T-cell (primary cell): ENCODE measurements at regions of chr16 and their contacts with region 1.

Region 1: GRCh38 chr16:7561908-7562405 is 229.3 kb downstream of the RBFOX1 start:
- DNase-seq: no peak
- ATAC-seq: no peak
- H3K4me3 ChIP-seq: no peak overlapping the region
- H3K4me3 Mint-ChIP-seq: no peak overlapping the region
- H3K27ac ChIP-seq: no peak overlapping the region
- H3K27ac Mint-ChIP-seq: no peak overlapping the region
- H3K4me1 ChIP-seq: no peaks in the 10 kb centered on the region
- H3K4me1 Mint-ChIP-seq: no peaks in the 10 kb centered on the region
- H3K27me3 ChIP-seq: no peaks in the 10 kb centered on the region
- H3K27me3 Mint-ChIP-seq: no peaks in the 10 kb centered on the region

Region 2: GRCh38 chr16:7313170-7313569 is 248.8 kb before region 1 on chr16:
- CTCF ChIA-PET with region 1: no interaction called
- POLR2A ChIA-PET with region 1: no interaction called
- DNase-seq: no peak
- ATAC-seq: no peak
- H3K4me3 ChIP-seq: no peak overlapping the region
- H3K4me3 Mint-ChIP-seq: no peak overlapping the region
- H3K27ac ChIP-seq: no peak overlapping the region
- H3K27ac Mint-ChIP-seq: no peak overlapping the region
- H3K4me1 ChIP-seq: no peaks in the 10 kb centered on the region
- H3K4me1 Mint-ChIP-seq: no peaks in the 10 kb centered on the region
- H3K27me3 ChIP-seq: no peaks in the 10 kb centered on the region
- H3K27me3 Mint-ChIP-seq: peaks cover 0 to 3% of the 10 kb centered on the region in 2 donors

Region 3: DNA sequence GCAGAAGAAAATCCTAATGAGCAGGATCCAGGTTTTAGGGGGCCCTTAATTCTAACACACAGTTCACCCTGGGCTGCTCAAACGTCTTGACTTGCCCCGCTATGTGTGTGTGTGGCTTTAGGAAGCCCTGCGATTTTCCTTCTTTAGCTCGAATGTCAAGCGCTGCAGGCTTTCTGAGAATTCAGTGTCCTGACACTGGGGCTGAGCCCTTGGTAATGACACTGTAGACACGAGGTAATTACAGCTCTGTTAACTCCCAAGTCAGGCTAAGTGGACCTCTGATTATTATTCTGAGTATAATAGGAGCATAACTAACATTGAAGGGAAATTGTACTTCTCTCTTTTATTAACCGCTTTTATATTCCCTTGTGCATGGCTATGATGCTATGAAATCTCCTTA is 27.2 kb before region 1 on chr16:
- CTCF ChIA-PET with region 1: no interaction called
- POLR2A ChIA-PET with region 1: interaction called in 1 of 2 experiments, 18 read pairs
- DNase-seq: no peak
- ATAC-seq: no peak
- H3K4me3 ChIP-seq: no peak overlapping the region
- H3K4me3 Mint-ChIP-seq: no peak overlapping the region
- H3K27ac ChIP-seq: no peak overlapping the region
- H3K27ac Mint-ChIP-seq: no peak overlapping the region
- H3K4me1 ChIP-seq: no peaks in the 10 kb centered on the region
- H3K4me1 Mint-ChIP-seq: no peaks in the 10 kb centered on the region
- H3K27me3 ChIP-seq: no peaks in the 10 kb centered on the region
- H3K27me3 Mint-ChIP-seq: no peaks in the 10 kb centered on the region

Region 4: GRCh38 chr16:8137606-8138005 is 575.6 kb after region 1 on chr16:
- CTCF ChIA-PET with region 1: no interaction called
- POLR2A ChIA-PET with region 1: no interaction called
- DNase-seq: no peak
- ATAC-seq: no peak
- H3K4me3 ChIP-seq: no peak overlapping the region
- H3K4me3 Mint-ChIP-seq: no peak overlapping the region
- H3K27ac ChIP-seq: no peak overlapping the region
- H3K27ac Mint-ChIP-seq: no peak overlapping the region
- H3K4me1 ChIP-seq: no peaks in the 10 kb centered on the region
- H3K4me1 Mint-ChIP-seq: no peaks in the 10 kb centered on the region
- H3K27me3 ChIP-seq: no peaks in the 10 kb centered on the region
- H3K27me3 Mint-ChIP-seq: no peaks in the 10 kb centered on the region

Region 5: GRCh38 chr16:8179615-8180014 is 617.7 kb after region 1 on chr16:
- CTCF ChIA-PET with region 1: no interaction called
- POLR2A ChIA-PET with region 1: no interaction called
- DNase-seq: no peak
- ATAC-seq: no peak
- H3K4me3 ChIP-seq: no peak overlapping the region
- H3K4me3 Mint-ChIP-seq: no peak overlapping the region
- H3K27ac ChIP-seq: no peak overlapping the region
- H3K27ac Mint-ChIP-seq: no peak overlapping the region
- H3K4me1 ChIP-seq: no peaks in the 10 kb centered on the region
- H3K4me1 Mint-ChIP-seq: no peaks in the 10 kb centered on the region
- H3K27me3 ChIP-seq: no peaks in the 10 kb centered on the region
- H3K27me3 Mint-ChIP-seq: no peaks in the 10 kb centered on the region